Activated CD4-positive, alpha-beta memory T cell treated with anti-CD3 and anti-CD28 coated beads, Interleukin-2, amount 10 ng/mL, durations not matched to agents 7 days and 5 days (primary cell): ENCODE measurements at regions of chr2 and their contacts with region 1.

Region 1: DNA sequence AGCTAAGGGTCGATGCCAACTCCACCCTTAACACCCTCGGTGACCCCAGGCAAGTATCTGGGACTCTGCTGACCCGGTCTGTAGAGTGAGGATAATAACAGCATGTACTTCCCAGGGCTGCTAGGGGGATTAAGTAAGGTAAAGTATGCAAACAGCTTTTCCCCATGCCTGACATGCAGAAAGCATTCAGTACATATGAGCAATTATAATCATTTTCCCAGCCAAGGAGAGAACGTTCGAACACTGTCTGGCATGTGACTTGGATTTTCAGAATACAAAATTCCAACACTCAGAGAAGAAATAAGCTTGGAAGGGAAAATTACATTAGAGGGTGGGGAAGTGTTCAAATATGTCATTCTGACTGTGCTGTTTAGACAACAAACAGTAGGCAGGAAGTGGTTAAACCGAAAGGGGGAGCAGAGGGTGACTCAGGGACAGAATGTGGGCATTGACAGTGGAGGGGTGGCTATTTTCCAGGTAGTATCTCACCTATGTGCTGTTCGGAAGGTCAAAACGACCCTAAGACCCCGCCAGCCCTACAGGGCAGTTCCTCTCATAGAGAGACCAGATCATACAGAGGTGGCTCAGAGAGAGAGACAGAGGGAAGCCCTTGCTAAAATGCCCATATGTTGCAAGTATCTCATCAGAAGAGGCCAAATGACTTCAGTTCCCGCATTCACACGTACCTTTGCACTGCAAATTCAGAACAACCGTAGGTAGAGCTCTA is 14.9 kb downstream of the ASPRV1 start:
- DNase-seq: peak; percentile 80
- H3K4me3 Mint-ChIP-seq: peak overlapping the region; percentile 12
- H3K27ac Mint-ChIP-seq: peak overlapping the region; percentile 94
- H3K4me1 Mint-ChIP-seq: peaks cover 56% of the 10 kb centered on the region
- H3K27me3 Mint-ChIP-seq: peaks cover 2% of the 10 kb centered on the region

Region 2: DNA sequence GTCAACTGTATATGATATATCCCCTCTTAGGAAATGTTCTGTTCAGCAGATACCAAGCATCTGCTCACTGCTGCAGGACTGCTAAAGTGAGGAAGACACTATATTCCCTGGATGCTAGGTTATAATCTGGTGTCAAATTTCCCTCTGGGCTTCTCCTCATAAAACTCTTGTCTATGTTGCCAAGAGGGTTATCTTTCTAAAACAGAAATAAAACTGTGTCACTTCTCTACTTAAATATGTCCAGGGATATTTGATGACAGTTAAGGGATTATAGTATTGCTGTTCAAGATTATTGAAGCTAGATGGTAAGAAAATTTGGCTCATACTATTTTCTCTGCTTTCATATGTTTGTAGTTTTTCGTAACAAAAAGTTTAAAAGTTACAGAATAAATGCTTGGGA is 83.2 kb before region 1 on chr2:
- CTCF ChIA-PET with region 1: no interaction called
- POLR2A ChIA-PET with region 1: no interaction called
- DNase-seq: no peak
- H3K4me3 Mint-ChIP-seq: no peak overlapping the region
- H3K27ac Mint-ChIP-seq: no peak overlapping the region
- H3K4me1 Mint-ChIP-seq: peaks cover 4% of the 10 kb centered on the region
- H3K27me3 Mint-ChIP-seq: no peaks in the 10 kb centered on the region

Region 3: GRCh38 chr2:69933839-69934613 is 12.5 kb before region 1 on chr2:
- CTCF ChIA-PET with region 1: interaction called, 4 read pairs
- POLR2A ChIA-PET with region 1: interaction called, 10 read pairs
- DNase-seq: no peak
- H3K4me3 Mint-ChIP-seq: no peak overlapping the region
- H3K27ac Mint-ChIP-seq: peak overlapping the region; percentile 15
- H3K4me1 Mint-ChIP-seq: peaks cover 40% of the 10 kb centered on the region
- H3K27me3 Mint-ChIP-seq: no peaks in the 10 kb centered on the region